ENCODE measurements at regions of chr12 and their contacts with region 1.

Region 1: GRCh38 chr12:14365294-14366208 is at the start of gene ATF7IP:
- DNase-seq: peak; percentile 95 to 97 (median 97)
- H3K4me3 ChIP-seq: peak within 1 kb of the TSS; percentile 45 to 81
- H3K4me3 Mint-ChIP-seq: peak within 1 kb of the TSS; percentile 82 to 99 (median 92)
- H3K27ac ChIP-seq: peak within 1 kb of the TSS; percentile 90
- H3K27ac Mint-ChIP-seq: peak within 1 kb of the TSS; percentile 85 to 99 (median 96)
- H3K4me1 ChIP-seq: peaks cover 34% of the 10 kb centered on the region
- H3K4me1 Mint-ChIP-seq: peaks cover 11 to 55% (median 29%) of the 10 kb centered on the region in 4 donors
- H3K27me3 ChIP-seq: no peaks in the 10 kb centered on the region
- H3K27me3 Mint-ChIP-seq: no peaks in the 10 kb centered on the region
- total RNA-seq, gene ATF7IP: 209 to 223 TPM

Region 2: DNA sequence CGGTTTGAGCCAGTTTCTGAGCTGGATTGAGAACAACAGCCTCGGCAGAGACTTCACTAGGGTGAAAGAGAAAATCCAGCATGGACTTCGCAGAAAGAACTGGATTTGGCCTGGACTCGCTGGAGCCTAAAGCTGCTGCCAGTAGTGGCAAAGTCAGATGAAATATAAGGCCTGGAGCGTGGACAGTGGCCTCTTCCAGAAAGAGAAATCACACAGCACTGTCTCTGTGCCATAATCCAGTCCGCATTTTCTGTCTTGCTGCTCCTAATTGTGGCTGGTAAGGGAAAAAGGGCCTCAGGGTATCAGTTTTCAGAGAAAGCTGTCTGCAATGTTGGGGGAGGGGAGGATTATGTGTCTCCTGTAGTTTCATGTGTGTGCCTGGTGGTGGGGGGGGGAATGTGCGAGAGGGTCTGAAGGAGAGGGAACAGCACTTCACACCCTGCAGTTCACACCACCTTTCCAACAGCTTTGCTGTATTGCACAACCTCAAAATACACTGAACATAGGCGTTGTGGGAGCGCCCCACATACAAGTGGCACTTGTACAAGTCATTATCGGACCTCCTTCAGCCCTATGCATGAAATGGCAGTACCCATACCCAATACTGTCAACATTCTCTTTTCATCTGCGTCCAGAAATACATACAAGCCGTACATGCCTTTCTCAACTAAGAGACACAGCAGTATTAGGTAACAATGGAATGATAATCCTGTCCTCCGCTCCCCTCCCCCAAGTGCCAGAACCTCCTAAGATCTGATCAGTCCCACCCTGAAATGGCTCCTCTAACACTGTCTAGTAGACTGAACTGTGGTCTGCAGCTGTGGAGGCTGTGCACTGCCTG is 107.6 kb before region 1 on chr12:
- CTCF ChIA-PET with region 1: interaction called, 39 read pairs
- POLR2A ChIA-PET with region 1: interaction called, 108 read pairs
- intact Hi-C with region 1: loop called (anchors 1 kb)
- DNase-seq: peak; percentile 81 to 92 (median 84)
- H3K4me3 ChIP-seq: peak overlapping the region; percentile 1 to 31
- H3K4me3 Mint-ChIP-seq: peak overlapping the region; percentile 75 to 91 (median 84)
- H3K27ac ChIP-seq: peak overlapping the region; percentile 49
- H3K27ac Mint-ChIP-seq: peak overlapping the region; percentile 95 to 99 (median 98)
- H3K4me1 ChIP-seq: peaks cover 44% of the 10 kb centered on the region
- H3K4me1 Mint-ChIP-seq: peaks cover 35 to 57% (median 42%) of the 10 kb centered on the region in 4 donors
- H3K27me3 ChIP-seq: no peaks in the 10 kb centered on the region
- H3K27me3 Mint-ChIP-seq: no peaks in the 10 kb centered on the region

Region 3: GRCh38 chr12:14403711-14404196 is 38.2 kb after region 1 on chr12:
- CTCF ChIA-PET with region 1: interaction called, 10 read pairs
- POLR2A ChIA-PET with region 1: interaction called, 196 read pairs
- intact Hi-C with region 1: no loop called
- DNase-seq: peak; percentile 55 to 72 (median 66)
- H3K4me3 ChIP-seq: peak overlapping the region in 1 of 2 donors; percentile 17
- H3K4me3 Mint-ChIP-seq: peak overlapping the region; percentile 40 to 88 (median 78)
- H3K27ac ChIP-seq: peak overlapping the region; percentile 33
- H3K27ac Mint-ChIP-seq: peak overlapping the region; percentile 86 to 98 (median 93)
- H3K4me1 ChIP-seq: peaks cover 98% of the 10 kb centered on the region
- H3K4me1 Mint-ChIP-seq: peaks cover 47 to 82% (median 68%) of the 10 kb centered on the region in 4 donors
- H3K27me3 ChIP-seq: no peaks in the 10 kb centered on the region
- H3K27me3 Mint-ChIP-seq: no peaks in the 10 kb centered on the region

Region 4: GRCh38 chr12:14431975-14432374 is 66.4 kb after region 1 on chr12:
- CTCF ChIA-PET with region 1: interaction called, 4 read pairs
- POLR2A ChIA-PET with region 1: interaction called, 15 read pairs
- intact Hi-C with region 1: no loop called
- DNase-seq: no peak
- H3K4me3 ChIP-seq: no peak overlapping the region
- H3K4me3 Mint-ChIP-seq: peak overlapping the region in 5 of 8 donors; percentile 13 to 54 (median 35)
- H3K27ac ChIP-seq: no peak overlapping the region
- H3K27ac Mint-ChIP-seq: peak overlapping the region in 3 of 7 donors; percentile 22 to 69 (median 48)
- H3K4me1 ChIP-seq: peaks cover 63% of the 10 kb centered on the region
- H3K4me1 Mint-ChIP-seq: peaks cover 39 to 70% (median 58%) of the 10 kb centered on the region in 4 donors
- H3K27me3 ChIP-seq: no peaks in the 10 kb centered on the region
- H3K27me3 Mint-ChIP-seq: no peaks in the 10 kb centered on the region

Region 5: DNA sequence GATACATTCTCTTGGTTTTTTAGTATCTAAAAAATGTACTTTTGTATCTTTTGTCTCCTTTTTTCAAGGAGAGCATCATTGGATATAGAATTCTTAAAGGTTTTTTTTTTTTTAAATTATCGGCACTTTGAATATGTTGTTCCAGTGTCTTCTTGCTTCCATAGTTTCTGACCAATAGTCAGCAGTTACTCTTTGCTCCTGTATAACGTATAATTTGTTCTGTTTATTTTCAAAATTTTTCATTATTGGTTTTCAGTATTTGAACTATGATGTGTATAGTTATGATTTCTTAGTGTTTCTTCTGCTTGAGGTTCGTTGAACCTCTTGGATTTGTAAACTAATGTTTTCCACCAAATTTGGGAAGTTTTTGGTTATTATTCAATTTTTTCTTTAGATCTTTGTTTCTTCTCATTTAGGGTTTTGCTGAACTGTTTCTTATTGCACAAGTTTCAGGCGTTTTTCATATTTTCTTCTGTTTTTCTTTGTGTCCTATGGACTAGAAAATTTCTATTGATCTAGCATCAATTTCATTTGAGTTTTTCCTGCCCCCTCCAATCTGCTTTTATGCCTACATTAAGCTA is 108.2 kb after region 1 on chr12:
- CTCF ChIA-PET with region 1: interaction called, 5 read pairs
- POLR2A ChIA-PET with region 1: interaction called, 3 read pairs
- intact Hi-C with region 1: loop called (anchors 10 kb)
- DNase-seq: peak in 4 of 5 donors; percentile 14 to 39 (median 35)
- H3K4me3 ChIP-seq: no peak overlapping the region
- H3K4me3 Mint-ChIP-seq: no peak overlapping the region
- H3K27ac ChIP-seq: no peak overlapping the region
- H3K27ac Mint-ChIP-seq: peak overlapping the region in 2 of 7 donors; percentile 17 to 61
- H3K4me1 ChIP-seq: no peaks in the 10 kb centered on the region
- H3K4me1 Mint-ChIP-seq: peaks cover 0 to 8% (median 5%) of the 10 kb centered on the region in 4 donors
- H3K27me3 ChIP-seq: no peaks in the 10 kb centered on the region
- H3K27me3 Mint-ChIP-seq: no peaks in the 10 kb centered on the region

Region 6: GRCh38 chr12:14723763-14724162 is 358.2 kb after region 1 on chr12:
- CTCF ChIA-PET with region 1: no interaction called
- POLR2A ChIA-PET with region 1: no interaction called
- intact Hi-C with region 1: no loop called
- DNase-seq: peak; percentile 49 to 66 (median 62)
- H3K4me3 ChIP-seq: no peak overlapping the region
- H3K4me3 Mint-ChIP-seq: no peak overlapping the region
- H3K27ac ChIP-seq: no peak overlapping the region
- H3K27ac Mint-ChIP-seq: peak overlapping the region in 1 of 7 donors; percentile 15
- H3K4me1 ChIP-seq: no peaks in the 10 kb centered on the region
- H3K4me1 Mint-ChIP-seq: peaks cover 0 to 3% (median 1%) of the 10 kb centered on the region in 4 donors
- H3K27me3 ChIP-seq: no peaks in the 10 kb centered on the region
- H3K27me3 Mint-ChIP-seq: peaks cover 5 to 6% of the 10 kb centered on the region in 2 donors

Measured in CD4-positive, alpha-beta memory T cell (primary cell).